AG04450 (cell line): ENCODE measurements at regions of chr9 and their contacts with region 1.

Region 1: GRCh38 chr9:133782157-133783130 is 44.3 kb upstream of the SARDH start:
- DNase-seq: peak; percentile 45
- H3K4me3 ChIP-seq: no peak overlapping the region
- H3K27ac ChIP-seq: no peak overlapping the region
- H3K27me3 ChIP-seq: no peaks in the 10 kb centered on the region
- CTCF ChIP-seq: peak; percentile 88

Region 2: GRCh38 chr9:133709015-133709611 is 73.3 kb before region 1 on chr9:
- CTCF ChIA-PET with region 1: no interaction called
- POLR2A ChIA-PET with region 1: no interaction called
- DNase-seq: no peak
- H3K4me3 ChIP-seq: no peak overlapping the region
- H3K27ac ChIP-seq: no peak overlapping the region
- H3K27me3 ChIP-seq: no peaks in the 10 kb centered on the region
- CTCF ChIP-seq: no peak

Region 3: DNA sequence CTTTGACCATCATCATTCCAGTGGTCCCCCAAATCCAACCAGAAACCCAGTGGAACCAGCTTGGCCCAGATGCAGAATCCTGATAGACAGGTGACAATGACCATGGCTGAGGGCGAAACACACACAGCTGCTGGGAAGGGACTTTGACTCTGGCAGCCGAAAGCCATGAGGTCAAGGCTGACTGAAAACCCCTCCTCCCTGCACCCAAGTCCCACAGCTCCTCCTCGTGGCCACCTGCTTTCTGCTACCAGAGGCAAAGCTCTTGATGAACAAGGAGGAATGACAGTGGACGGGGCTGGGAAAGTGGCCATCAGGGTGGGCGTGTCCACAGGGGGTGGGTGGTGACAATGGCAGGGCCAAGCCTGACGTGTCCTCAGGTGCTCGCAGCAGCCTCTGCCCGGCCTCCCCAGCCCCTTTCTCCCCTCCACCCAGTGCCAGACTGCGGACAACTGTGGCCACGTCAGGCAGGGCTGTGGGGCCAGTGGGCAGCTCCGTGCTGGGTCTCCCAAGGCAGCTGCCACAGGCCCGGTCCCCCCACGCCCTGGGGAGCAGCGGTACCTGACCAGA is 13.5 kb before region 1 on chr9:
- CTCF ChIA-PET with region 1: interaction called, 17 read pairs
- POLR2A ChIA-PET with region 1: no interaction called
- DNase-seq: no peak
- H3K4me3 ChIP-seq: no peak overlapping the region
- H3K27ac ChIP-seq: no peak overlapping the region
- H3K27me3 ChIP-seq: no peaks in the 10 kb centered on the region
- CTCF ChIP-seq: no peak

Region 4: GRCh38 chr9:133792721-133793470 is 10.5 kb after region 1 on chr9:
- CTCF ChIA-PET with region 1: interaction called, 19 read pairs
- POLR2A ChIA-PET with region 1: no interaction called
- DNase-seq: peak; percentile 48
- H3K4me3 ChIP-seq: no peak overlapping the region
- H3K27ac ChIP-seq: no peak overlapping the region
- H3K27me3 ChIP-seq: no peaks in the 10 kb centered on the region
- CTCF ChIP-seq: peak; percentile 95

Region 5: DNA sequence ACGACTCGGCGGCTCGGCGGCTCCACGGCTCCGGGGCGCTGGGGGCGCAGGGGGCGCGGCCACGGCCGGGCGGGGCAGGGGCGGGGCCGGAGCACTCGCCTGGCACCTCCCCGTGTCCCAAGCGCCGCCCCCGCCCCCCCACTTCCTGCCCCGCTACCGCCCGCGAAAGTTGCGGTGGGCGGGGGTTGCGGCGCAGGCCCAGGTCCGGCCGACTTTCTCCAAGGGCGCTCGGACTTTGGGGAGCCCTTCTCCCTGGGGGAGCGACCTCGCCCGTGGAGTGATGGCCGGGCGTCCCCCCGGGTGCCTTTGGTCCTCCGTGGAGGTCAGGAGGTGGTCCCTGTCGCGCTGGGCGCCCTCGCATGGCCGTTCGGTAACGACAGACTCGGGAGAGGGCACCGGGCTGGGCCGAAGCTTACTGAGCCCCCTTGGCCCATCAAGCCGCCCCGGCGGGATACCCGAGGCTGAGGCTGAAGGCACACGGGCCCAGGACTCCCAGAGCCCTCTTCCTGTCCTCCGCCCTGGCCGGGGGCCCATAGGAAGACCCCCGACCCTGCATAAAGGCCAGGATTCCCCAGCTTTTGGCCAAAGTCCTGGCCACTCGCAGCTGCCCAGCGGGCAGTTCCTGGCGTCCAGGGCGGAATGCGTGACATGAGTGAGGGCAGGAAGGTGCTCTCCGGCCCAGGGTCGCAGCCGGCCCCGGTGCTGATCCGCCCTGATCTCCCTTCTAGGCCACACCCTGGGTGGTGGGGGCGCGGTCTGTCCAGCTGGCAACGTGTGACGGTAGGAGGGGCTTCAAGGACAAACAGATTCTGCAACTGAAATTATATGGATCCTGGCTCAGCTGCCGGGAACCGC is 210.6 kb after region 1 on chr9:
- CTCF ChIA-PET with region 1: interaction called, 119 read pairs
- POLR2A ChIA-PET with region 1: interaction called, 4 read pairs
- DNase-seq: peak; percentile 69
- H3K4me3 ChIP-seq: peak overlapping the region; percentile 86
- H3K27ac ChIP-seq: peak overlapping the region; percentile 92
- H3K27me3 ChIP-seq: peaks cover 4% of the 10 kb centered on the region
- CTCF ChIP-seq: peak; percentile 34

Region 6: DNA sequence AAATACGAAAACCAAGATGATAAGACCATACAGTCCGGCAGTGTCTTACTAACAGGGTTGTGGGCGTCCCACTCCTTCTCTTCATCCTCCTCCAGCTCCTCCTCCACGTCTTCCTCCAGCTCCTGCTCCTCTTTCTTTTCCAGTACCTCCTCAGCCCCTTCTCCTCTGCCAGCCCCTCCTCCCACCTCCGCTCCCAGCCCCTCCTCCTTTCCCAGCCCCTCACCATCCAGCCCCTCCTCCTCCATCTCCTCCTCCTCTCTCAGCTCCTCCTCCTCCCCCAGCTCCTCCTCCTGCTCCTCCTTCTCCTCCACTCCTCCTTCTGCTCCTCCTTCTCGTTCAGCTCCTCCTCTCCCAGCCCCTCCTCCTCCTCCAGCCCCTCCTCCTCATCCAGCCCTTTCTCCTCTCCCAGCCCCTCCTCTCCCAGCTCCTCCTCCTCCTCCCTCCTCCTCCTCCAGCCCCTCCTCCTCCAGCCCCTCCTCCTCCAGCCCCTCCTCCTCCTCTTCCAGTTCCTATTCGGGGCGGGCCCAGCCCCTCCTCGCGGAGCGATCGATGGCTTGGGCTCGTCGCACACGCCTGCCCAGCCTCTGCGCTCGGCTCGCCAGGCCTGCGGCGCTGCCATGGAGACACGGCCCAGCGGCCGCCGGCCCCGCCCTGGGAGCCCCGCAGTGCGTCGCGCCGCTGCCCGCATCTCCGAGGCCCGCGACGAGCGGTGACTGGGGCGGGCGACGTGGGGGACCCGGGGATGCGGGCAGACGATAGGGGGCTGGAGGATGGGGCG is 242.6 kb after region 1 on chr9 and contains the start of gene BRD3OS:
- CTCF ChIA-PET with region 1: interaction called, 13 read pairs
- POLR2A ChIA-PET with region 1: interaction called, 3 read pairs
- DNase-seq: peak; percentile 100
- H3K4me3 ChIP-seq: peak within 1 kb of the TSS; percentile 90
- H3K27ac ChIP-seq: peak within 1 kb of the TSS; percentile 31
- H3K27me3 ChIP-seq: no peaks in the 10 kb centered on the region
- CTCF ChIP-seq: no peak
- polyA plus RNA-seq, gene BRD3OS: 20.2 and 20.3 TPM in 2 replicates